ENCODE measurements at regions of chr1 and their contacts with region 1.

Region 1: DNA sequence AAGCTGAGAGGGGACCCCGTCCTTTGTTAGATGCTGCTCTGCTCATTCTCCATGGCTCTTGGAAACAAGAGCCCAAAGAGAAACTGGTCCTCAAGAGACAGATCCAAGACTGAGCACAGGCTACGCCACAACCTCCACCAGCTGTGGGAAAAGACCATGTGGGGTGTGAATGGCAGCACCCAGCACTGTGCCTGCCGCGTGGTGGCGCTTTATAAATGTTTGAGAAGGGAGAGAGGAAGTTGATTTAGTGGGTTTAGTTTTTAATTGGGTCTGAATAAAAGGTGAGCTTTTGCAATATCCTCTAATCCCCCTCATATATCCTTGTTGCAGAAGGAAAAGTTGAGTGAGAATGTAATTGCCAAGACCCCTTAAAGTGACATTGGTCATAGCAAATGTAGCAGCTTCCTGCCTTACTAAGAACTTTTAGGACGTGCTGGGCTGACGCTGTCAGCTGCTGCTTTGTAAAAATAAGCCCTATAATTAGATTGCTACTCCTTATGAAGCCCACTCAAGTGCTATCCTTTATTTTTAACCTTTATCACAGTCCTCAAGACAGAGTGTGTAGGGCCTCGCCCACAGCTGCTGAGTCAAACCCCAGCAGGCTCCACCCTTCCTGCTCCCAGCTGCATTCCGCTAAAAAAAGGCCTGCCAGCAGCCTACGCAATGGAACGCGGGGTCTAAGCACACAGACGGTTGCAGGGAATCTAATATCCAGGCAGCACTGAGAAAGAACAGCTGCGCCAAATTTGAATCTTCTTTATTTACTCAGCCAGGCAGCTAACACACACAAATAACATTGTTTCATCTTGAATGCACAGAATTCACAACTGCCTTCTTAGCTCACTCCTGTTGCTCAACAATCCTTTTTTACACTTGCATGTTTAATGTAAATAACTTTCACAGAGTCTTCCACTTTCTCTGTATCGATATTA is 47.4 kb upstream of the PRDX6 start:
- DNase-seq: peak; percentile 95
- H3K4me3 ChIP-seq: peak overlapping the region; percentile 28 to 41 (median 33)
- H3K27ac ChIP-seq: peak overlapping the region; percentile 79 to 88 (median 84)
- H3K4me1 ChIP-seq: peaks cover 26 to 33% (median 31%) of the 10 kb centered on the region in 4 donors
- H3K27me3 ChIP-seq: no peaks in the 10 kb centered on the region
- CTCF ChIP-seq: peak; percentile 67 to 73 (median 70)
- EP300 ChIP-seq: no peak
- POLR2A ChIP-seq: no peak

Region 2: GRCh38 chr1:173276922-173277800 is 152.6 kb before region 1 on chr1:
- intact Hi-C with region 1: no loop called
- DNase-seq: no peak
- H3K4me3 ChIP-seq: no peak overlapping the region
- H3K27ac ChIP-seq: no peak overlapping the region
- H3K4me1 ChIP-seq: no peaks in the 10 kb centered on the region
- H3K27me3 ChIP-seq: no peaks in the 10 kb centered on the region
- CTCF ChIP-seq: no peak
- EP300 ChIP-seq: no peak
- POLR2A ChIP-seq: no peak

Region 3: DNA sequence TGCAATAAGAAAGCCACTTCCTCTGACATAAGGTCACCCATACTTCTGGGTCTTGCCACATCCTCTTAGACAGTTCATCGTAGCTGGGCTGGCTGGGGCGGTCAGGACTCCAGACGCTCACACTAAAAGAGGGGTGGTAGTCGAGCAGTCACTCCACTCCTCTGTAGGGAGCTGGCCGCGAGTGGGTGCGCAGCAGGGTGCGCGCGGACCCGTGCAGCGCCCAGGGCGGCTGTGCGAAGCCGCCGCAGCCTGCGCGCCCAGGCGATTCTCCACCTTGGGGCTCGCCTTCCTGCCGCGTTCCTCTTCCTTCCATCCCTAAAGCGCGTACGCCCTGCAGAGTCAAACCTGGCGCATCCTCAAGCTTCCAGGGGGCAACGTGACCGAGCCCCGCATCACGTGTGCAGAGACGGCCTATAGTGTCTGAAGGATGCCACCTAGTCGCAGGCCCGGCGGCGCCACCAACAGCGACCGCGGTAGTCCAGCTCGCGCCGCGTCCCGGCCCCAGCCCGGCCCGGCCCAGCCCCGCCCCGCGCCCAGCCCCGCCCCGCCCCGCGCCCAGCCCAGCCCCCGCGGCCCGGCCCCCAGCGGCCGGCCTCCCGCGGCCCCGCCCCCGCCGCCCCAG is 47.0 kb after region 1 on chr1:
- intact Hi-C with region 1: loop called (anchors 1 kb)
- DNase-seq: peak; percentile 96
- H3K4me3 ChIP-seq: peak overlapping the region; percentile 85 to 95 (median 93)
- H3K27ac ChIP-seq: peak overlapping the region; percentile 97 to 100 (median 100)
- H3K4me1 ChIP-seq: peaks cover 60 to 79% (median 75%) of the 10 kb centered on the region in 4 donors
- H3K27me3 ChIP-seq: no peaks in the 10 kb centered on the region
- CTCF ChIP-seq: no peak
- EP300 ChIP-seq: no peak
- POLR2A ChIP-seq: peak; percentile 18

Region 4: GRCh38 chr1:173714759-173715537 is 285.2 kb after region 1 on chr1 and contains the start of gene KLHL20:
- intact Hi-C with region 1: loop called (anchors 5 kb)
- DNase-seq: peak; percentile 92
- H3K4me3 ChIP-seq: peak within 1 kb of the TSS; percentile 75 to 91 (median 82)
- H3K27ac ChIP-seq: peak within 1 kb of the TSS; percentile 89 to 94 (median 90)
- H3K4me1 ChIP-seq: peaks cover 14 to 35% (median 26%) of the 10 kb centered on the region in 4 donors
- H3K27me3 ChIP-seq: peaks cover 0 to 9% (median under 1%) of the 10 kb centered on the region in 4 donors
- CTCF ChIP-seq: peak in 2 of 3 experiments; percentile 7 to 21
- EP300 ChIP-seq: no peak
- POLR2A ChIP-seq: peak; percentile 24
- total RNA-seq, gene KLHL20: 28.3 to 38.3 (median 33.3) TPM